ENCODE measurements at regions of chr11 and their contacts with region 1.

Region 1: DNA sequence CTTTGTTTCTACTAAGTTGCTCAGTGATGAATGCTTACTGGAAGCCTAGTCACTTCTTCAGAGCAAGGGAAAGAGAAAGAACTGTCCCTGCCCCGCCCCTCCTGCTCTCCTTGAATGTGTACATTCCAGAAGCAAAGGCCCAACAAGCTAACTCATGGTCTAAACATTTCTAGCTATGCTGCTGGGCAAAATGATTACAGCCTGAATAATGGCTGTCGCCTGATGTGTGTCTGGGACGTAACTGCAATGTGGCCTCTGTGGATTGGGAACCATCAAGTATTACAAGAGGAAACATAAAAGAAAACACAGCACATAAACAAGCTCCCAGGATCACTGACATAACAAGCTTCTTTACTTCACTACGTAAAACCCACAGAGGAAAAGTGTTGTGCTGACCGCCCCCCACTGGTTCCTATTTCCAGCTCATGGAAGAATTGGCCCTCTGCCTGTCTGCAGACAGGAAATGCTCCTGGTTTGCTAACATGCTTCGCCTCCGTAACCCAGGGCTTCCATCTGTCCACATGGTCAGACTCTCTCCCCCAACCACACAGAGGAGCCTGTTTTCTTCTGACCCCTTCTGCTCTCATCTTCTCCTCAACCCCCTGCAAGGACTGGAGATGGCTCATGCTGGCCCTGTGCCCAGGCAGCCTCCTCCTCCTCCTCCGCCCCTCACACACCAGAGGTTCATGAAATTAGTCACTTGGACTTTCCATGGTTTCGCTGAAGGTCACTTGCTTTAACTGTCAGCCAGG is 187.2 kb downstream of the MAML2 start:
- DNase-seq: peak; percentile 41
- H3K4me3 Mint-ChIP-seq: peak overlapping the region; percentile 61
- H3K27ac Mint-ChIP-seq: peak overlapping the region; percentile 94
- H3K4me1 Mint-ChIP-seq: peaks cover 55% of the 10 kb centered on the region
- H3K27me3 Mint-ChIP-seq: no peaks in the 10 kb centered on the region

Region 2: DNA sequence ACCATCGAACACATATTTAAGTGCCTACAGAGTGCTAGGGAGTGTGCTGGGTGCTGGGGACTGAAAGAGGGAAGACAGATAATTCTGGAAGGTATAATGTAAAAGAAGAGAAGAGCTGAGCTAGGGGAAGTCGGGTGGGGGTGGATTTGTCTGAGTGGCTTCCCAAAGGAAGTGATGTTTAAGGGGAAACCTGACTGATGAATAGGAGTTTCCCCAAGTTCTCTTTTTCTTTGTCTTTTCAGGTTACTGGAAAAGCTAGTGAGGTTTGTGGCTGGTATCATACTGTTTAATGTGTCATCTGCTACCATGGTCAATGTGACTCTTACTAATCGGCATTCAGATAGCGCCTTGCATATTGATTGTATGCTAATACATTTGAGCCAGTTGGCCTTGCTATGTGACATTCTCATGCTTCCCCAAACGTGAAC is 80.3 kb before region 1 on chr11:
- intact Hi-C with region 1: loop called (anchors 1 kb)
- DNase-seq: no peak
- H3K4me3 Mint-ChIP-seq: peak overlapping the region; percentile 15
- H3K27ac Mint-ChIP-seq: peak overlapping the region; percentile 78
- H3K4me1 Mint-ChIP-seq: peaks cover 35% of the 10 kb centered on the region
- H3K27me3 Mint-ChIP-seq: no peaks in the 10 kb centered on the region

Region 3: DNA sequence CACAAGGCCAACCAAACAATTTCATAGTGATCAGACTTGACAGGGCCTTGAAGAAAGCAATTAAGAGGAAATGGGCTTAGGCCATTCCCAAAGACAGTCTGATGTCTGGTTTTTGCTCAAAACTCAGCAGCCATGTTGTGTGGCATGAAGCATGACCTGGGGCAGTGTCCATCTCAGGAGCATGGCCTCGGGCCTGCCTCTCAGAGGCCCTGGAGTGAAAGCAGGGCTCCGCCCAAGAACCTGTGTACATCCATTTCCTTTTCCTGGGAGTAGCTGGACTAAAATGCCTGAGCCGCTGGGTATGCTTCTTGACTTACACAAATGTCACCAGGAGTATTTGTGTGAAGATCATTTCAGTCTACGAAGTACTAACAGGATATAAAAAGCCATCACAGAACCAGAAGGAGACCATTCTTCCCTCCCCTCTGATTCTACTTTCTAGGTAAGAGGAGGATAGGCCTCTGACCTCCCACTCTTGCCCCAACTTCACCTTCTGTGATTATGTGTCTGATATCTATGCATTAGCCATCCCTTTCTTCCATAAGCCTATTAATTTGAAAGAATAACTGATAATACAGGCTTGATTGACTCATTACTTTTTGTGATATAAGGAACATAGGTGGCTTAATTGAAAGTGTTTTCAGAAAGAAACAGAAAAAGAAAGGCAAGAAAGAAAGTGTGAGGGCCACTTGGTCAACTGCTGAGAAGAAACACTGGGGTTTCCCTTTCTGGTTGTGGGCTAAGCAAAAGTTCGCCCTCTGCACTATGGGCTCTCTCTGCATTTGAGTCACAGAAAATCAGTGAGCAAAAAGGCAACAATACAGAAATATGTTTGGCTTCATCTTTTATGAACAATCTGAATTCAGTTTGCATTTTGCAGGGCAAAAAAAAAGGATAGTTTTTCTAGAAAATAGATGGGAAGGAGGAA is 43.3 kb before region 1 on chr11:
- intact Hi-C with region 1: loop called (anchors 1 kb)
- DNase-seq: no peak
- H3K4me3 Mint-ChIP-seq: peak overlapping the region; percentile 50
- H3K27ac Mint-ChIP-seq: peak overlapping the region; percentile 84
- H3K4me1 Mint-ChIP-seq: peaks cover 32% of the 10 kb centered on the region
- H3K27me3 Mint-ChIP-seq: no peaks in the 10 kb centered on the region

Region 4: DNA sequence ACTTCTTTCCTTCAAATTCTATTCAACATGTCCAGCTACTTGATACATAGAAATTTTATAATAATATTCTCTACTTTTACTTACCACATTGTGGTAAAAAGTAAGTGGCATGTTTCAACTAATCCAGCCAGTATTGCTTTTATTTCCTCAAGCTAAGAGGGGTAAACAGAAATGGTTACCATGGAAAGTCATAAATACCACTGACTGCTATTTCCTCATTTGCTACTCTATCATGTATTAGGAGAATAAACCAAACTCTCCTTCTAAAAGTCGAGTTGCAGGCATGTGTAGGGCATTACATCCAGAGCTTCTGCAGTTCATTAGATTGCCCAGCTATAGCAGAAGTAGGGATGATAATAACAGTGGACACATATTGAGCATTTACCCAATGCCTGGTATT is 21.2 kb before region 1 on chr11:
- intact Hi-C with region 1: no loop called
- DNase-seq: no peak
- H3K4me3 Mint-ChIP-seq: no peak overlapping the region
- H3K27ac Mint-ChIP-seq: no peak overlapping the region
- H3K4me1 Mint-ChIP-seq: peaks cover 48% of the 10 kb centered on the region
- H3K27me3 Mint-ChIP-seq: no peaks in the 10 kb centered on the region

Region 5: DNA sequence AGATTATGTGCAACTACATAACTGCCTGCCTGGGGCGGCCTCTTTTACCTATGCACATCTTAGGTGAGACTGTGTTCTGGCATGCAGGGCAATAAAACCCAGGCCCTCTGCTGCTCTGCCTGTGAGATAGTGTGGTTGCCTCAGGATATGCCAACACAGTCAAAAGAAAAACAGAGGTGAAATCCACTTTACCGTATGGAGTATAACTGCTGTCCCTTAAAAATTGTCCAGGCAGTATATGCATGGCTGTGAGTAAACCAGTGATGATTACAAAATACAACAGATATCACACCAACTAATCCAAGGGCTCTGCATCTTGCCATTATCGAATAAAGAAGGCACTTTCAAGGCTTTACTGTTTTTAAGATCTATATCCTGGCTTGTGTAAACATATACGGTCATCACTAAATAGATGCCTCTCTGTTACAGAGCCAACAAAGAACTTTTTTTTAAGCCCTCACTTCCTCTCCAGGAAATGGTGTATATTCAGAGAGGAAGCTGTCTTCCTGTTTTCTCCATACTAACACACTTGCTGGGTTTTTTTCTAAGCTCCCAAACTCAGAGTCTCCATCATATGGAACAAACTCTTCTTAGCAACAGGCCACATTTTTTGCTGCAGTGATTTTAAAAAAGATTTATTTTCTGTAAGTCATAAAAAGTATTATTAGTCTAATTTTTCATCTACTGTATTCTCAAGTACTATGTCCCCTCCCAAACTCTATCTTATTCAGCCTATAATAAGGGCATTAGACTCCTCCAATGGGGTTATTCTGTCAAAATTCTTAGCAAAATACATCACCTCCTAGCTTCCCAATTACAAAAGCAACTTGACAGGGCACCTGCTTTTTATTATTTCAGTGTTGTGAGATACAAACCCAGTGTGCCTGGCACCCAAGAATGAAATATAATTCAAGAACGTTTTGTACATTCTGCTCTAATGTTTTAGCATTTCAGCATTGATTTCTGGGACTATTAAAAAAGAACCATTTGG is 52.0 kb after region 1 on chr11:
- intact Hi-C with region 1: loop called (anchors 1 kb)
- DNase-seq: no peak
- H3K4me3 Mint-ChIP-seq: peak overlapping the region; percentile 72
- H3K27ac Mint-ChIP-seq: peak overlapping the region; percentile 95
- H3K4me1 Mint-ChIP-seq: peaks cover 83% of the 10 kb centered on the region
- H3K27me3 Mint-ChIP-seq: no peaks in the 10 kb centered on the region

Region 6: DNA sequence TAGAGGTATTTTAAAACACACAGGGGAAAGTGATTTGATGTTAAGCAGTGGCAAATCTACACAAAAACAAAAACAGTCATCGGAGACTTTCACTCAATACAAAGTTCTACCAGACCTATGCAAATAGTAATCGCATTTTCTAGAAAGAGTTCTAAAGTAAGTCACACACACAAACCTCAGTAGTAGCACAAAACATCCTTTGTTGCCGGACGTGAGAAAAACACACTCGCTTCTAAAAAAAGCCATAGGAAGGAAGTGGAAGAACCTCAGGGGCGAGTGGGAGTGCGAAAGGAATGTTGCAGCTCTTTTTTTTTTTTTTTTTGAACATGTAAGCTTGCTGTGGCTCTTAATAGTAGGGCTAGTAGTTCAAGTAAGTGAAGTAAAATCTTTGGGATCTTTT is 98.3 kb after region 1 on chr11:
- intact Hi-C with region 1: loop called (anchors 1 kb)
- DNase-seq: peak; percentile 30
- H3K4me3 Mint-ChIP-seq: peak overlapping the region; percentile 77
- H3K27ac Mint-ChIP-seq: peak overlapping the region; percentile 92
- H3K4me1 Mint-ChIP-seq: peaks cover 75% of the 10 kb centered on the region
- H3K27me3 Mint-ChIP-seq: no peaks in the 10 kb centered on the region

Region 7: GRCh38 chr11:96389720-96390487 is 234.1 kb after region 1 on chr11 and contains the starts of genes CCDC82 and JRKL:
- intact Hi-C with region 1: loop called (anchors 1 kb)
- DNase-seq: peak; percentile 97
- H3K4me3 Mint-ChIP-seq: peak within 1 kb of the TSS; percentile 95
- H3K27ac Mint-ChIP-seq: peak within 1 kb of the TSS; percentile 85
- H3K4me1 Mint-ChIP-seq: peaks cover 64% of the 10 kb centered on the region
- H3K27me3 Mint-ChIP-seq: no peaks in the 10 kb centered on the region
- total RNA-seq, gene CCDC82: 28.5 and 29.9 TPM in 2 replicates
- total RNA-seq, gene JRKL: 9.6 and 10.2 TPM in 2 replicates